Left cardiac atrium (tissue), 4 donors: ENCODE measurements at regions of chr10 and their contacts with region 1.

Region 1: DNA sequence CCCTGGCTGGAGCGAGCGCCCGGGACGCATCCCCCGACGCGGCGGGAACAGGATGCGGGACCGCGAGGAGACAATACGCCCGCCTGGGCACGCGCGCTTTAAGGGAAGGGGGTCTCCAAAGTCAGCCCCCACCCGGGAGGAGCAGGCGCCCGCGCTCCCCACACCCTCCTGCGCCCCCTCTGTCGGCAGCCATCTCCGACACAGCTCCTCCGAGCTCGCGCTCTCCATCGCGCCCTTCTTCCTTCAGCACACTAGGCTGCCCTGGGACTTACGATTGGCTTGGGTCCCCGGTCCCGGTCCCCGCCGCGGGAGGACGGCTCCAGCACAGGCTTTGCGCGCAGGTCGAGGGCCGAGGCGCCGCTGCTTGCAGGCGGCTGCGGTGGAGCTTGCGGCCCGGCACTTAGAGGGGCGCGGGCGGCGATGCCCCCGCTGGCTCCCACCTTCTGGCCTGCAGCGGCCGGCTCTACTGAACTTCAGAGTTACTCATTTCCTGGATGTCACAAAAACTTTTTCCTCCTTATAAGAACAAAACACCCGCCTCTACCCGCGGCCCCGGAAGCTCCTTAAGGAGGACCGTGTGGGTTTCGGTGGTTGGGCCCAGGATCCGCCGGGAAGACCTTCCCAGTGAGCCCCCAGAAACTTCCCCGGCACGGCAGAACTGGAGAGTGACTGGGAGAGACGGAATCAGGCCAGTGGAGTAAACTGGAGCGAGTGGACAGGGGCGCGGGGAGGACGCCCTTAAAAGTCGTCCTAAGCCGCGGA is at the start of gene ITPRIP:
- DNase-seq: peak; percentile 84
- ATAC-seq: peak; percentile 79 to 87
- total RNA-seq, gene ITPRIP: 45.4 to 90.7 TPM

Region 2: DNA sequence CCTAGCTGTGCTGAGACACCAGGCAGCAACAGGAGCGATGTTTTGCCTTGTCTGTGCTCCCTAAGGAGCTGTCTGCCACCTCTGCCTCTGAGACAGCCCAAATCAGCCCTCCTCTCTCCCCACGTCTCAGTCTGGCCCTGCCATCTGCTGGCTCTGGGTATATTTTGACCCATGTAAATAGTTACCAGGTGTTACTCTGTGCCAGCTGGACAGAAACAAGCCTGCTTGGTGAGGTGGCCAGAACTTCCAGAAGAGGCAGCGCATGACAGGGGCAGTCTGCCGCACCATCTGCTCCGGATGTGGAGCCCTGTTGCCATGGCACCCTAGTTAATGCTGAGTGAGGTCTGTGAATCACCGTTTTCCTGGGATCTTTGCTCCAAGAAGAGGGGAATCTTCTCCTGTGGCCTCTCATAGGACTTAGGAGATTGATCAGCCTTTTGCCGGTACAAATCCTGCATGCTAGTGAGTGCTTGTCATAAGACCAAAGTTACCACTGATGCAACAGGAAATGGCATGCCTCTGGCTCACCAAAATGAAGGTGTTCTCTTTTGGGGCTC is 37.3 kb before region 1 on chr10:
- intact Hi-C with region 1: loop called (anchors 2 to 5 kb)
- DNase-seq: peak; percentile 84
- ATAC-seq: peak; percentile 57 to 76